Activated CD4-positive, alpha-beta memory T cell treated with anti-CD3 and anti-CD28 coated beads for 36 hours (primary cell): ENCODE measurements at regions of chr1 and their contacts with region 1.

Region 1: DNA sequence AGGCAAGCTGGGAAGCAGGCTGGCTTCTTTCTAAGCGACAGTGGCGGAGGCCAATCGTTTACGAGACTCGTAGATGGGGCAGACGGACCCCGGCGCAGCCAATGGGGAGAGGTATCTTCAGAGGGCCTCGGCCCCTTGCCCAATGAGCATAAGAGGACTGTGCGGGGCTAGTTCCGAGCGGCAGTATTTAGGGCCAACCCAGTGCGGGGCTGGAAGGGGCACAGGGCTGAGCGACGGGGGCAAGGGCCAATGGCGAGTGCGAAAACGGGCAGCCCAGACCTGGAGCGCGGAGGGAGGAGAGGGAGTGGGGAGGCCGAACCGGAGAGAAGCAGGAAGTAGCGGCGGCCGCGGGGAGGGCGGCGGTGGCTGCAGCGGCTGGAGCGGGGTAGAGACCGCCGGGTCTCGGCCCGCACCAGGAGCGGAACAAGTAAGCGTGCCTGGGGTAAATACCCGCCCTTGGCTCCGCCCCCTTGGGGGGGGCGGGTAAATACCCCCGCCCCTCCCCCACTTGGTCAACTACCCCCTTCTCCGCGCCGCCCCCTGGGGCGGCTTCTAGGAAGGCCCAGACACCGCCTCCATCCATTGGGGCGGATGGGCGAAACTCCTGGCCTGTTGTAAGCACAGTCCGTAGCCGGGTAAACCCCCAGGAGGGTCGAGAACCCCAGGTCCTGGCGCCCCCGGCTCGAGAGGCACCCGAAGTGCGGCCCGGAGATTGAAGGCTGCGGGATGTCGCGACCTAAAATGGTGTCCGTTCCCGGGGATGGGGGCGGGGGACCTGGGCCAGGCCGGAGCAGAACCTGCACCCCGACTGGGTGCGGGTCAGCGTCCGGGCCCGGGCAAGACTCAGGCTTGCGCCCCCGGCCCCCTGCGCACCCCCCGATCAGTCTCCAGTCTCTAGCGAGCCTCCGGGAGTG is at the start of gene ZNF687:
- DNase-seq: peak; percentile 99
- H3K4me3 Mint-ChIP-seq: peak within 1 kb of the TSS; percentile 94
- H3K27ac Mint-ChIP-seq: peak within 1 kb of the TSS; percentile 98
- H3K4me1 Mint-ChIP-seq: peaks cover 28% of the 10 kb centered on the region
- H3K27me3 Mint-ChIP-seq: no peaks in the 10 kb centered on the region
- total RNA-seq, gene ZNF687: 27.1 to 27.2 TPM

Region 2: DNA sequence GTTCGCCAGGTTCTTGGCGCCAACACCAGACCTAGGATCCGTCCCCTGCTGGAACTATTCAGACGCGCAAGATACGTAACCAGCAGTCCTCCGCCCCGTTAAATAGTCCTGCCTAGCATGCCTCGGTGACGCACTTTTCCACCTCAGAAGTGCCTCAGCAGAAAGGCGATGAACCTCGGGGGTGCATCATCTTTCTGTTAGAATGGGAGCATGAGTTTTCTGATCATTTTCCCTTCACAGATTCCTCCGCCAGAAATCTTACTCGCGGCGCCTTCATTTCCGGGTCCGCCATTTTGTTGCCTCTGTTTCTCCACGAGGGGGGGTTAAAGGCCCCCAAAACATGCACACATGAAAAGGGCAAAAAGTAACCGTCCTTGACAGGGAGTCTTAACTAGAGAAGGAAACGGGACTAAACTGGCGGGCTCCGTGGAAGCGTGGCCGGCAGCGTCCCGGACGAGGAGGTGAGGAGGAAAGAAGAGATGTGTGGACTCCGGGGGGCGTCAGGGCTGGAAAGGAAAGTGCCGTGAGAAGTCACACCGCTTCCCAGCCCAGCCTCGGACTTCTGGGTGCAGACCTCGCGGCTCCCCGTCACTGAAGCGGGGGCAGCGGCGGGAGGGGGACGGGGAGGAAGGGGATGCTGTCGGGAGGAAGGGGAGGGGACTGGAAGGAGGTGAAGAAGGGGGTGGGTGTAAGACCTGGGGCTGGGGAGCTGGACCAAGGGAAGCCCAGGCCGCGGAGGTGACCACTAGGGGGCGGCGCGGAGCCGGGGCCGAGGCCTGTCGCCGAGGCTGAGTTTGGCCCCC is 211.6 kb before region 1 on chr1 and contains the start of gene GABPB2:
- CTCF ChIA-PET with region 1: no interaction called
- POLR2A ChIA-PET with region 1: no interaction called
- intact Hi-C with region 1: loop called (anchors 1 kb)
- DNase-seq: peak; percentile 93
- H3K4me3 Mint-ChIP-seq: peak within 1 kb of the TSS; percentile 94
- H3K27ac Mint-ChIP-seq: peak within 1 kb of the TSS; percentile 100
- H3K4me1 Mint-ChIP-seq: peaks cover 15% of the 10 kb centered on the region
- H3K27me3 Mint-ChIP-seq: no peaks in the 10 kb centered on the region
- total RNA-seq, gene GABPB2: 13.6 to 14.9 TPM

Region 3: GRCh38 chr1:151254217-151255213 is 27.7 kb before region 1 on chr1 and contains the start of gene PSMD4:
- CTCF ChIA-PET with region 1: interaction called, 6 read pairs
- POLR2A ChIA-PET with region 1: interaction called, 10 read pairs
- intact Hi-C with region 1: loop called (anchors 1 kb)
- DNase-seq: peak; percentile 97
- H3K4me3 Mint-ChIP-seq: peak within 1 kb of the TSS; percentile 92
- H3K27ac Mint-ChIP-seq: peak within 1 kb of the TSS; percentile 81
- H3K4me1 Mint-ChIP-seq: peaks cover 25% of the 10 kb centered on the region
- H3K27me3 Mint-ChIP-seq: peaks cover 2% of the 10 kb centered on the region
- total RNA-seq, gene PSMD4: 212 to 227 TPM

Region 4: DNA sequence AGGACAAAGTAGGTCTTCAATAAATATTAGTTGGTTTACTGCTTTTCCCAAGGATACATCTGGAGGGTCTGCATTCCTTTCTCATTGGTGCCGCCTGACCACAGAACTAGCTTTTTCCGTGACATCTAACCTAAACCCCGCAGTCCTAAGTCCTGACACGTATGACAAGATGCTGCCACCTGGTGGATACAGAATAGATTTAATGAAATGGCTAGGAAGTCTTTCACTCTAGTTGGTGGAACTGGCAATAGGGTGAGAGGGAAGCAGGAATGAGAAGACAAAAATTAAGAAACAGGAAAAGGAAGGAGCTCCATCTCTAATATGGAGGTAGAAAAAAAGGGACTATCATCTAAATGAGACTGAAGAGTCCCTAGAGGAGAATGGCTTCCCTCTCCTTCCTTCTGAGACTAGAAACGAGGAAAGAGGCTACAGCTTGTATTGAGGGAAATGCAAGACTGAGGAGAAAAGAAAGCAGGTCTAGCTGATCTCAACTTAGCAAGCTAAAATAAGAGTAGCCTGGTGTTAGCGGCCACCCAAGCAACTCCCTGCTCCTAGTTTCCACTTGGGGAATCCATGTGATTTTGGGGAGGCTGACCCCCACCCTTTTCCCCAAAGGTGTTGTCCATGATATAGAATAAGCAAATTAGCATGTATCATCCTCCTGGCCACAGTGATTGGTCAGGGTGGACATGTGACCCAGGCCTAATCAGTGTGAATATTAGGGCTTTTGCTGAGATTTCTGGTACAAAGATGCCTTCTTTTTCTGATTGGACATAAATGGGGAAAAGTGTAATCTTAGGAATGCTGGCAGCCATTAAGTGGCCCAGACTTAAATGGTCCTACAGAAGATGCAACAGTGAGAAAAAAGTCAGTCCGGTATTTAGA is 58.9 kb after region 1 on chr1:
- CTCF ChIA-PET with region 1: interaction called, 16 read pairs
- POLR2A ChIA-PET with region 1: interaction called, 8 read pairs
- intact Hi-C with region 1: loop called (anchors 1 kb)
- DNase-seq: peak; percentile 63
- H3K4me3 Mint-ChIP-seq: no peak overlapping the region
- H3K27ac Mint-ChIP-seq: peak overlapping the region; percentile 29
- H3K4me1 Mint-ChIP-seq: peaks cover 25% of the 10 kb centered on the region
- H3K27me3 Mint-ChIP-seq: no peaks in the 10 kb centered on the region

Region 5: DNA sequence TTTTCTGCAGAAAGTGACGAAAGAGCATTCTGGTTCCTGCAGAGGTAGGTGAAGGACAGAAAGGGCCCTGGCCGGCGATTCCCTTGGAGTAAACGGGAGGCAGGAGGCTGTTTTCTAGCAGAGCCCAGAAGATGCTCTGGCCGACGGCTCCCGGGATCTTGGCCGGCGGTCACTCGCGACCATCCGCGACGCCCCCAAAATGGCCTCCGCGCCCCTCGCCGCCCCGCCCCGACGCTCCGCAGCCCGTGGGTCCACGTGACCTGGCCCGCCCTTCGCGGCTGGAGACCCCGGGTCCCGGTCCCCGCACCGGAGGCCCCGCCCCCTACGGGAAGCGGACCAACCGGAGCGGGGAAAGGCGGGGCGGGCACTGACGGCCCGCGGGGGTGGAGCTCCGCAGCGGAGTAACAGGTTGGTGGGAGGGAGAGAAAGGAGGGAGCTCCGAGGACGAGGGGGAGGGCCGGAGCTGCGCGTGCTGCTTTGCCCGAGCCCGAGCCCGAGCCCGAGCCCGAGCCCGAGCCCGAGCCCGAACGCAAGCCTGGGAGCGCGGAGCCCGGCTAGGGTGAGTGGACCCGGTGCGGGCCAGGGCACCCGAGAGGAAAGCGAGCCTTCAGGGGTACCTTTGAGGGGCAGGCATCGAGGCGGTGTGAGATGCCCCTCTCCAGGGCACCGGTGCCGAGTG is 228.9 kb after region 1 on chr1 and contains the start of gene CGN:
- CTCF ChIA-PET with region 1: no interaction called
- POLR2A ChIA-PET with region 1: interaction called, 3 read pairs
- intact Hi-C with region 1: loop called (anchors 5 kb)
- DNase-seq: peak; percentile 90
- H3K4me3 Mint-ChIP-seq: peak within 1 kb of the TSS; percentile 80
- H3K27ac Mint-ChIP-seq: no peak within 1 kb of the TSS
- H3K4me1 Mint-ChIP-seq: peaks cover 20% of the 10 kb centered on the region
- H3K27me3 Mint-ChIP-seq: no peaks in the 10 kb centered on the region
- total RNA-seq, gene CGN: 1.3 to 1.4 TPM